ENCODE measurements at regions of chr9 and their contacts with region 1.

Region 1: DNA sequence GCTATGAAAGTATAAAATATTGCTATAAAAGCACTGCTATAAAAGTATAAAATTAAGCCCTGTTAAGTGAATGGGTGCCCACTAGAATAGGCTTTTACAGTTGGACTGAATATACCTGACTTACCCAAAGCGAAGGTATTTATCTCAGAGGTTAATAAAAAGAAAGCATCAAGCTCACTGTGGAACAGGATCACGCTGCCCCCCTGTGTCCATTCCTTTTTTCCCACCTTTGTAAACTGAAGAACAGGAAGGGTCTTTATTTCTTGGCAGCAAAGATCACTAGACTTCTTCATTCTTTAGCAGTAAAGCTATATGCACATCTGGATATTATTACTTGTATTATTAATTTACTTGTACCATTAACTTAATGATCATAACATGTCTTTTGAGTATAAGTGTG is 22.1 kb upstream of the PLPP6 start:
- DNase-seq: peak; percentile 76
- H3K4me3 Mint-ChIP-seq: no peak overlapping the region
- H3K27ac Mint-ChIP-seq: no peak overlapping the region
- H3K4me1 Mint-ChIP-seq: peaks cover 2% of the 10 kb centered on the region
- H3K27me3 Mint-ChIP-seq: no peaks in the 10 kb centered on the region

Region 2: DNA sequence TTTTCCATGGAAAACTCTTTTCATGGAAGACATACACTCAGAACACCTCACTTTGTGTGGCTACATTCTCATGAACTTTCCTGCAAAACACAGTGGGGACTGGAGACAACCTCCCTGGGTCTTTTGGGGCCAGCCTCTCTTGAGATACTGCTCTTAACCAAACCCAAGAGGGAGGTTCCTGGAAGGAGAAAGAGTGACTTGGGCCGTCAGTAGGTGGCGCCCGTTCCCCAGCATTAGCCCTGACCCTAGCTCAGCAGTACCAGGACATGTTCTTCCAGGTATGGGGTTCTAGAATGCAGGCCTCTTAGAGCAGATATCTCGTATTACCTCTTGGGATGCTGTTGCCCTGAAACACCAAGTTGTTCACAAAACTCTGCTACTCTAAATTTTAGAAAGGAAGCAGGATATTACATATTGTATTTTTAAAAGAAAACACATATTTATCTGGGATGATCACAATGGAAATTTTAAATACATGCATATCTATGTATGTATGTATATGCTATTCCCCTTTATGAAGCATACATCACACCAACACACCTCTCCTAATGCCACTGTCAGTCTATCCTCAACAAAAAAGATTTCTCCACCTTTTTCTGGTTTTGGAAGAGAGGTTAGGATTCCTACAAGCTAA is 324.3 kb before region 1 on chr9:
- CTCF ChIA-PET with region 1: interaction called, 10 read pairs
- intact Hi-C with region 1: loop called (anchors 1 kb)
- DNase-seq: peak; percentile 89
- H3K4me3 Mint-ChIP-seq: no peak overlapping the region
- H3K27ac Mint-ChIP-seq: no peak overlapping the region
- H3K4me1 Mint-ChIP-seq: peaks cover 2% of the 10 kb centered on the region
- H3K27me3 Mint-ChIP-seq: no peaks in the 10 kb centered on the region

Region 3: GRCh38 chr9:4382722-4383317 is 257.2 kb before region 1 on chr9:
- CTCF ChIA-PET with region 1: interaction called, 12 read pairs
- intact Hi-C with region 1: loop called (anchors 1 kb)
- DNase-seq: peak; percentile 21
- H3K4me3 Mint-ChIP-seq: no peak overlapping the region
- H3K27ac Mint-ChIP-seq: no peak overlapping the region
- H3K4me1 Mint-ChIP-seq: peaks cover 1% of the 10 kb centered on the region
- H3K27me3 Mint-ChIP-seq: no peaks in the 10 kb centered on the region

Region 4: GRCh38 chr9:4489919-4490704 is 149.9 kb before region 1 on chr9 and contains the start of gene SLC1A1:
- CTCF ChIA-PET with region 1: interaction called, 7 read pairs
- intact Hi-C with region 1: loop called (anchors 2 kb)
- DNase-seq: peak; percentile 33
- H3K4me3 Mint-ChIP-seq: peak within 1 kb of the TSS; percentile 67
- H3K27ac Mint-ChIP-seq: no peak within 1 kb of the TSS
- H3K4me1 Mint-ChIP-seq: peaks cover 24% of the 10 kb centered on the region
- H3K27me3 Mint-ChIP-seq: peaks cover 42% of the 10 kb centered on the region
- total RNA-seq, gene SLC1A1: not detected

Region 5: DNA sequence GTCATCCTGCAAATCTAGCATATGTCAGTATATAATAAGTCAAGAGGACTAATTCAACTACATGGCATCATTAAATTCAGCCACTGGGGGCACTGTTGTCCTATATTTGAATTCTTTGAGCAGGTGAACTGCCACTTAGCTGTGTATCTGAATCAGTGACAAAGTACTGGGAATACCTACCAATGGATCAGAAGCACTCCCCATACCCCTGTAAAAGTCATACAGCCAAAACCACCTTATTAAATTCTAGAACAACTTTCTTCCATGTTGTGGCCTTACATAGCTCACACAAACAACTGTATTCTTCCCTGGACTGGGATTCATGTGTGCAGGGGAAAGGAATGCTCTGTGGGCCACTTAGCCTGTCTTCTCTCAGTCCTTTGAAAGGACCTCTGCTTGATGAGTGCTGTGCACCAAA is 35.3 kb before region 1 on chr9:
- CTCF ChIA-PET with region 1: interaction called, 14 read pairs
- intact Hi-C with region 1: loop called (anchors 1 kb)
- DNase-seq: peak; percentile 88
- H3K4me3 Mint-ChIP-seq: no peak overlapping the region
- H3K27ac Mint-ChIP-seq: no peak overlapping the region
- H3K4me1 Mint-ChIP-seq: peaks cover 19% of the 10 kb centered on the region
- H3K27me3 Mint-ChIP-seq: no peaks in the 10 kb centered on the region

Measured in activated naive CD4-positive, alpha-beta T cell treated with anti-CD3 and anti-CD28 coated beads for 36 hours (primary cell).